Activated CD4-positive, alpha-beta memory T cell treated with anti-CD3 and anti-CD28 coated beads, Interleukin-2, amount 10 ng/mL, durations not matched to agents 7 days and 5 days (primary cell): ENCODE measurements at regions of chr7 and their contacts with region 1.

Region 1: DNA sequence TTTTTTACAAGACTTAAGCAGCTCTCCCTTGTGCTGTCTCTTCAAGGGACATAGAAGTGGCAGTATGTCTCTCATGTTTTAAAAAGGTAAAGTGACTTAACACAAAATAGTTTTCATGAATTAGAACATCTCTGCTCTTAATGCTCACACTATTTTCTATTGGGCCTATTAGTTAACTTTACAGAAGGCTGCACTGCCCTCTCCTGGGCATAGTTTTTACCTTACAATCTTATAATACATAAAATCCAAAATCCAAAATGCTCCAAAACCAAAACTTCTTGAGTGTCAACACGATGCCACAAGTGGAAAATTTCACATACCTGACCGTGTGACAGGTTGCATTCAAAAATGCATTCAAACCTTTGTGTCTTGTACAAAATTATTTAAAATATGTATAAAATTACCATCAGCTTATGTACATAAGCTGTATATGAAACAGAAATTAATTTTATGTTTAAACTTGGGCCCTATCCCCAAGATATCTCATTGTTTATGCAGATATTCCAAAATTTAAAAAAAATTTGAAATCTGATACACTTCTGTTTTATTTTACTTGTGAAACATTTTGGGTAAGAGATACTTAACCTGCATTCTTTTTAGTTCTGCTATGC is 25.8 kb downstream of the TES start:
- DNase-seq: peak; percentile 60
- H3K4me3 Mint-ChIP-seq: no peak overlapping the region
- H3K27ac Mint-ChIP-seq: no peak overlapping the region
- H3K4me1 Mint-ChIP-seq: peaks cover 50% of the 10 kb centered on the region
- H3K27me3 Mint-ChIP-seq: no peaks in the 10 kb centered on the region

Region 2: DNA sequence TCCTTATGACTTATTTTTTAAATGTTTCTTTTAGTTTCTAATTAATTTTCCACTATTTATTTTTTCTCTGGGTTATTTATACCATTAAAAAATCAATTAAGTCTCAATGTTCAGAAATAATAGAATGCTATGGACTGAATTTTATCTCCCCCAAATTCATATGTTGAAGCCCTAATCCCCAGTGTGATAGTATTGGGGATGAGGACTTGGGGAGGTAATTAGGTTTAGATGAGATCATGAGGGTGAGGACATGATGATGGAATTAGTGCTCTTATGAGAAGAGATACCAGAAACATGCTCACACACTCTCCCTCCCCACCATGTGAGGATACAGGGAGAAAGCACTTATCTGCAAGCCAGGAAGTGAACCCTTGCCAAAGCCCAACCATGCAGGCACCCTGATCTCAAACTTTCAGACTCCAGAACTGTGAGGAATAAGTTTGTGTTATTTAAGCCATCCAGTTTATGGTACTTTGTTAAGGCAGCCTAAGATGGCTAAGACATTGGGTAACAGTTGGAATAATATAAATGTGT is 1111.6 kb before region 1 on chr7:
- CTCF ChIA-PET with region 1: no interaction called
- POLR2A ChIA-PET with region 1: no interaction called
- DNase-seq: no peak
- H3K4me3 Mint-ChIP-seq: no peak overlapping the region
- H3K27ac Mint-ChIP-seq: no peak overlapping the region
- H3K4me1 Mint-ChIP-seq: peaks cover 1% of the 10 kb centered on the region
- H3K27me3 Mint-ChIP-seq: no peaks in the 10 kb centered on the region

Region 3: GRCh38 chr7:116180302-116180701 is 55.8 kb before region 1 on chr7:
- CTCF ChIA-PET with region 1: interaction called, 198 read pairs
- POLR2A ChIA-PET with region 1: interaction called, 13 read pairs
- DNase-seq: no peak
- H3K4me3 Mint-ChIP-seq: no peak overlapping the region
- H3K27ac Mint-ChIP-seq: no peak overlapping the region
- H3K4me1 Mint-ChIP-seq: no peaks in the 10 kb centered on the region
- H3K27me3 Mint-ChIP-seq: peaks cover 3% of the 10 kb centered on the region

Region 4: GRCh38 chr7:116216956-116217571 is 19.1 kb before region 1 on chr7:
- CTCF ChIA-PET with region 1: interaction called, 43 read pairs
- POLR2A ChIA-PET with region 1: interaction called, 58 read pairs
- DNase-seq: no peak
- H3K4me3 Mint-ChIP-seq: no peak overlapping the region
- H3K27ac Mint-ChIP-seq: no peak overlapping the region
- H3K4me1 Mint-ChIP-seq: peaks cover 82% of the 10 kb centered on the region
- H3K27me3 Mint-ChIP-seq: no peaks in the 10 kb centered on the region

Region 5: GRCh38 chr7:116258734-116259133 is 22.6 kb after region 1 on chr7:
- CTCF ChIA-PET with region 1: interaction called, 10 read pairs
- POLR2A ChIA-PET with region 1: interaction called, 3 read pairs
- DNase-seq: no peak
- H3K4me3 Mint-ChIP-seq: no peak overlapping the region
- H3K27ac Mint-ChIP-seq: no peak overlapping the region
- H3K4me1 Mint-ChIP-seq: peaks cover 11% of the 10 kb centered on the region
- H3K27me3 Mint-ChIP-seq: peaks cover 4% of the 10 kb centered on the region

Region 6: DNA sequence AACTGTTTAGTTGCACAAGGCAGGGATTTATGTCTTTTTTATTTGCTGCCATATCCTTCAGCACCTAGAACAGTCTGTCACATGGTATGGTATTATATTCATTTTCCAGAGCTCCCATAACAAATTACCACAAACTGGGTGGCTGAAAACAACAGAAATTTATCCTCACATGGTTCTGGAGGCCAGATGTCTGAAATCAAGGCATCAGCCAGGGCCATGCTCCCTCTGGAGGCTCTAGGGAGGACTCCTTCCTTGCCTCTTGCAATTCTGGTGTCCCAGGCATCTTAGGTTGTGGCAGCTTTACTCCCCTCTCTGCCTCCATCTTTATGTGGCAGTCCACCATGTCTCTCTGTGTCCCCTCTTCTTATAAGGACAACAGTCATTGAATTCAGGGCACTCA is 479.0 kb after region 1 on chr7:
- CTCF ChIA-PET with region 1: no interaction called
- POLR2A ChIA-PET with region 1: no interaction called
- DNase-seq: no peak
- H3K4me3 Mint-ChIP-seq: no peak overlapping the region
- H3K27ac Mint-ChIP-seq: no peak overlapping the region
- H3K4me1 Mint-ChIP-seq: no peaks in the 10 kb centered on the region
- H3K27me3 Mint-ChIP-seq: peaks cover 4% of the 10 kb centered on the region